ENCODE measurements at regions of chr1 and their contacts with region 1.

Region 1: DNA sequence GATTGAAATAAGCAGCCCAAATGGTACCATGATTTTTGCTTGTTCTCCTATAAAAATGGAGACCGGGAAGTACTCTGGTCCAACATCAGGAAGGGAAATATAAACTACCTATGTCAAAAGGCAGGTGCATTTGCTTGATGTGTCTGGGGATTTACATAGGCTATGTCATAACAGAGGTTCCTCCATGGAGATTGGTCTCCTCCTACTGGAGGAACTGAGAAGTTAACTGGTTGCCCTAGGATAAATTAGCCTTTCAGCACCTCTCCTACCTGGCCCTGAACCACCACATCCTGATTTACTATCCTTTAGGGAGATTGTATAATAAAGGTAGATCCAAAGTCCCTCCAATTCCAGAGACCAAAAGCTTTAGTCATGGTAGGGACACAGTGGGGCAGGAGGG is 1109.3 kb upstream of the B3GALT2 start:
- DNase-seq: peak in 8 of 14 experiments; percentile 7 to 85 (median 30)
- ATAC-seq: peak; percentile 99
- H3K4me3 ChIP-seq: no peak overlapping the region
- H3K4me3 Mint-ChIP-seq: no peak overlapping the region
- H3K27ac ChIP-seq: no peak overlapping the region
- H3K27ac Mint-ChIP-seq: peak overlapping the region; percentile 13
- H3K4me1 ChIP-seq: peaks cover 4% of the 10 kb centered on the region
- H3K4me1 Mint-ChIP-seq: peaks cover 23% of the 10 kb centered on the region
- H3K27me3 ChIP-seq: no peaks in the 10 kb centered on the region
- H3K27me3 Mint-ChIP-seq: no peaks in the 10 kb centered on the region
- CTCF ChIP-seq: peak; percentile 92

Region 2: DNA sequence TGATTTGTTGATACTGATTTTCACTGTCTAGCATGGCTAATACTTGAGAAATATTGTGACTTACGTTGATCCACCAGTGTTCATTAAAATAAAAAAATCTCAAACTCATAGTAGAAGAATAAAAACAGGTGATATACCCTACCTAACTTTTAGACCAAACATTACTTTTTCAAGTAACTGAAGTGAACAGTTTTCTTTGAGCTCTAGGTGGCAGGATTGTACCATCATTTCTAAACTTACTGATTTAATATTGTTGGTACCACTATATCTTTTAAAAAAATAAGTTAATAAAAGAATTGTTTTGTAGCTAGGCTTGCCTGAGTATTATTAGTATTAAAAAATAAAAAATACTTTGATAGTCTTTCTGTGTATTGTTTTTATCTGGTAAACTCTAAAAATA is 1152.4 kb before region 1 on chr1:
- CTCF ChIA-PET with region 1: no interaction called
- POLR2A ChIA-PET with region 1: no interaction called
- intact Hi-C with region 1: loop called in 1 of 2 experiments (anchors 10 kb)
- DNase-seq: peak in 3 of 14 experiments; percentile 23 to 31 (median 30)
- ATAC-seq: no peak
- H3K4me3 ChIP-seq: no peak overlapping the region
- H3K4me3 Mint-ChIP-seq: no peak overlapping the region
- H3K27ac ChIP-seq: no peak overlapping the region
- H3K27ac Mint-ChIP-seq: peak overlapping the region; percentile 6
- H3K4me1 ChIP-seq: no peaks in the 10 kb centered on the region
- H3K4me1 Mint-ChIP-seq: peaks cover 38% of the 10 kb centered on the region
- H3K27me3 ChIP-seq: no peaks in the 10 kb centered on the region
- H3K27me3 Mint-ChIP-seq: no peaks in the 10 kb centered on the region
- CTCF ChIP-seq: peak; percentile 36

Region 3: GRCh38 chr1:193256019-193256418 is 1039.7 kb before region 1 on chr1:
- CTCF ChIA-PET with region 1: no interaction called
- POLR2A ChIA-PET with region 1: no interaction called
- intact Hi-C with region 1: loop called in 1 of 2 experiments (anchors 10 kb)
- DNase-seq: no peak
- ATAC-seq: no peak
- H3K4me3 ChIP-seq: no peak overlapping the region
- H3K4me3 Mint-ChIP-seq: no peak overlapping the region
- H3K27ac ChIP-seq: no peak overlapping the region
- H3K27ac Mint-ChIP-seq: no peak overlapping the region
- H3K4me1 ChIP-seq: no peaks in the 10 kb centered on the region
- H3K4me1 Mint-ChIP-seq: no peaks in the 10 kb centered on the region
- H3K27me3 ChIP-seq: no peaks in the 10 kb centered on the region
- H3K27me3 Mint-ChIP-seq: no peaks in the 10 kb centered on the region
- CTCF ChIP-seq: no peak

Region 4: DNA sequence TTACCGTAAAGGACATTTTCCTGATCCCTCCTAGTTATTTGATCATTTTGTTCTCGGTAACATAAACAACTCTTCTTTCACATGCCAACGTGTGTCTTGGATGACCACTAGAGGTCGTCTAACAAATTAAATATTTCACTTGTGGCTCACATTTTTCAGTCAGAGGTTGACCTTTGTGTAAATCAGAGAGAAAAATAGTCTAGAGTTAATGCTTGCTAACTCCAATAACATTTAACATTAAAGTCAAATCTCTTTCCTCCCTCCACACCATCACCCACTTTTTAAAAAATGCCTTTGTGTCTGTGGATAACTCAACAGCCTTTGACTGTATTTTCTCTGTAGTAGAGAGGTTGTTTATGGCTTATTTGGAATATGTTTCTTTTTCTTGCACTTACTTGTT is 888.8 kb before region 1 on chr1:
- CTCF ChIA-PET with region 1: no interaction called
- POLR2A ChIA-PET with region 1: no interaction called
- intact Hi-C with region 1: loop called (anchors 1 to 2 kb)
- DNase-seq: peak in 4 of 14 experiments; percentile 18 to 70 (median 69)
- ATAC-seq: peak; percentile 74
- H3K4me3 ChIP-seq: no peak overlapping the region
- H3K4me3 Mint-ChIP-seq: no peak overlapping the region
- H3K27ac ChIP-seq: no peak overlapping the region
- H3K27ac Mint-ChIP-seq: peak overlapping the region; percentile 28
- H3K4me1 ChIP-seq: no peaks in the 10 kb centered on the region
- H3K4me1 Mint-ChIP-seq: peaks cover 40% of the 10 kb centered on the region
- H3K27me3 ChIP-seq: no peaks in the 10 kb centered on the region
- H3K27me3 Mint-ChIP-seq: no peaks in the 10 kb centered on the region
- CTCF ChIP-seq: peak; percentile 86

Measured in CD4-positive, alpha-beta T cell (primary cell).